ENCODE measurements at regions of chr7 and their contacts with region 1.

Region 1: GRCh38 chr7:105402221-105403095 is 13.7 kb upstream of the SRPK2 start:
- DNase-seq: no peak
- ATAC-seq: no peak
- H3K4me3 Mint-ChIP-seq: no peak overlapping the region
- H3K27ac Mint-ChIP-seq: no peak overlapping the region
- H3K4me1 Mint-ChIP-seq: peaks cover 10% of the 10 kb centered on the region; the same call in 1 of the 2 replicates
- H3K27me3 Mint-ChIP-seq: no peaks in the 10 kb centered on the region
- CTCF ChIP-seq: no peak

Region 2: GRCh38 chr7:105238198-105238765 is 164.2 kb before region 1 on chr7:
- CTCF ChIA-PET with region 1: no interaction called
- POLR2A ChIA-PET with region 1: no interaction called
- DNase-seq: no peak
- ATAC-seq: no peak
- H3K4me3 Mint-ChIP-seq: no peak overlapping the region
- H3K27ac Mint-ChIP-seq: peak overlapping the region; percentile 28; the same call in 1 of the 2 replicates
- H3K4me1 Mint-ChIP-seq: peaks cover 35% of the 10 kb centered on the region
- H3K27me3 Mint-ChIP-seq: no peaks in the 10 kb centered on the region
- CTCF ChIP-seq: no peak

Region 3: GRCh38 chr7:105439174-105439893 is 36.9 kb after region 1 on chr7:
- CTCF ChIA-PET with region 1: interaction called, 10 read pairs
- POLR2A ChIA-PET with region 1: interaction called, 5 read pairs
- DNase-seq: peak; percentile 17
- ATAC-seq: peak; percentile 58
- H3K4me3 Mint-ChIP-seq: no peak overlapping the region
- H3K27ac Mint-ChIP-seq: peak overlapping the region; percentile 78; the same call in 1 of the 2 replicates
- H3K4me1 Mint-ChIP-seq: peaks cover 5% of the 10 kb centered on the region
- H3K27me3 Mint-ChIP-seq: peaks cover 2% of the 10 kb centered on the region; the same call in 1 of the 2 replicates
- CTCF ChIP-seq: no peak

Region 4: GRCh38 chr7:105602325-105603305 is 200.2 kb after region 1 on chr7:
- CTCF ChIA-PET with region 1: no interaction called
- POLR2A ChIA-PET with region 1: no interaction called
- DNase-seq: no peak
- ATAC-seq: no peak
- H3K4me3 Mint-ChIP-seq: no peak overlapping the region
- H3K27ac Mint-ChIP-seq: peak overlapping the region; percentile 4; the same call in 1 of the 2 replicates
- H3K4me1 Mint-ChIP-seq: peaks cover 22% of the 10 kb centered on the region
- H3K27me3 Mint-ChIP-seq: no peaks in the 10 kb centered on the region; the same call in 1 of the 2 replicates
- CTCF ChIP-seq: no peak

Region 5: DNA sequence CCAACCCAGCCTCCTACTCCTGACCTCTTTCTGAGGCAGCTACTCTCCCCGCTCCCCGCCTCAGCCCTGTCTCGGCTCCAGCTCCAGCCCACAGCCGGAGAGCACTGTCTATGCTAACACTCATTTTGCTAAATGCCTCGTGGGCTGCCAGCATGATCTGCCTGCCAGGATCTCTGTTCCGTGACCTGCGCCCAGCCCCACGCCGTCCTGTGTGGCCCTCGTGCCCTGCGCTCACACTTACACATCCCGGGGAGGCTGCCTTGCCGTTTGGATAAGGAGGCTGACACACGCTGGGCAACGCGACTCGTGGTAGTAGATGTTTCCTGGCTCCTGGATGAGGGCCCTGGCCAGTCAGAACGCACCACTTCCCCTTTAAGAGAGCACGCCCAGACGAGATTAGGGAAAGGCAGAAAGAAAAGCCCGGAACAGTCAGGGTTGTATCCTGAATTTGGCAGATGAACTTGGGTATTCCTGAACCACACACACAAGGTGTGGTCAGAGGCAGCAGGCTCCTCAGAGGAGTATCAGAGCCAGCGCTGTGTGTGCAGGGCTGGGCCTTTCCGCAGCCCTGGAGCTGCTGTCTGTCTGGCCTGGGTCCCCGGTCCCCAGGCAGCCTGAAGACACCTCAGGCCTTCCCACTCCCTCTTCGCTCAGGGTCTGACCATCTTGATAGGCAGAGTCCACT is 276.5 kb after region 1 on chr7:
- CTCF ChIA-PET with region 1: no interaction called
- POLR2A ChIA-PET with region 1: no interaction called
- DNase-seq: no peak
- ATAC-seq: peak; percentile 64
- H3K4me3 Mint-ChIP-seq: no peak overlapping the region
- H3K27ac Mint-ChIP-seq: peak overlapping the region; percentile 71
- H3K4me1 Mint-ChIP-seq: peaks cover 76% of the 10 kb centered on the region
- H3K27me3 Mint-ChIP-seq: no peaks in the 10 kb centered on the region
- CTCF ChIP-seq: no peak

Measured in WTC11 (cell line).